Heart left ventricle (tissue), 16 donors: ENCODE measurements at regions of chr5 and their contacts with region 1.

Region 1: DNA sequence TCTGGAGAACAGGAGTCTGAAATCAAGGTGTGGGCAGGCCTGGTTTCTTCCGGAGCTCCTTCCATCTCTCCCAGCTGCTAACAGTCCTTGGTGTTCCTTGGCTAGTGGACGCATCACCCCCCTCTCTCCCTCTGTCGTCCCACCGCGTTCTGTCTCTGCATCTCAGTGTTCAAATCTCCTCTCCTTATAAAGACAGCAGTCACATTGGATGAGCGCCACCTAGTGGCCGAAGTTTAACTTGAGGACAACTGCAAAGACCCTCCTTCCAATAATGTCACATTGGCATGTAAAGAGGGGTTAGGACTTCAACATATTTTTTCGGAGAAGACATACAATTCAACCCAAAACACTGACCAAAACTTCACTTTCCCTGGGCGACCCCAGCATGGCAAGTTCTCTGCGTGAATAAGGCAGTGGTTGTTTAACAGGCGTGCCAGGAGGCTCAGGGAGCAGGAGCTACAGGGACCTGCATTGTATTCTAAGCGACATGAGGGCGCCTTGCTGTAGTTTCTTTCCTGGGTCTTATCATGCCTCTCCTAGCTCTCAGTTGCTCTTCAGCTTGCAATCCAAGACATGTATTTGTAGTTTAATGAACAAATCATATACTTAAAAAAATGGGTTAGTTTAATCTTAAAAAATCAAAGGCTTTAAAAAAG is 27.9 kb upstream of the BASP1 start:
- DNase-seq: peak; percentile 61 to 83 (median 78)
- ATAC-seq: peak; percentile 50 to 75 (median 64)
- H3K4me3 ChIP-seq: no peak overlapping the region
- H3K27ac ChIP-seq: no peak overlapping the region
- H3K4me1 ChIP-seq: peaks cover 0 to 21% (median 6%) of the 10 kb centered on the region in 12 donors
- H3K27me3 ChIP-seq: no peaks in the 10 kb centered on the region
- CTCF ChIP-seq: peak; percentile 77 to 90 (median 82)
- POLR2A ChIP-seq: no peak

Region 2: DNA sequence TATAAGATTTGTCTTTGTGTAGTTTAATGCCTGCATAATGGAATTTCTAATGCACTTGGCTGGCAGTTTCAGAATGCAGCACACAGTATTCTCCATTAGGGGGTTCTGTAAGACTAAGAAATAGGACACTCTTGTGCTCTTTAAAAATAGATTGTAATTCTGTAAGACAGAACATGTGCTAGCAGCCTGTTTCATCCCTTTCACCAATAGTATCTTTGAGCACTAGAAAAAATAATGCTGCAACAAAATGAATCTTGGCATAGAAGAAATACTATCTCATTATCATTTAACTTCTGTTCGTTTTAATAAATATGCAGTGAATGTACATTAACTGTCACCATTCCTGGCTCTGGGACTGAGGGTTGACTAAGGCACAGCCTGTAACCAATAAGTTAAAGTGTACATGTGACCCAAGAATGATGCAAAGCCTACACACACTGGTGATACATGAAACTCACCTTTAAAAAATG is 700.2 kb before region 1 on chr5:
- intact Hi-C with region 1: loop called in 2 of 10 experiments (anchors 10 kb)
- DNase-seq: no peak
- ATAC-seq: peak; percentile 56 to 75 (median 72)
- H3K4me3 ChIP-seq: no peak overlapping the region
- H3K27ac ChIP-seq: peak overlapping the region in 9 of 12 donors; percentile 11 to 82 (median 78)
- H3K4me1 ChIP-seq: peaks cover 0 to 56% (median 20%) of the 10 kb centered on the region in 12 donors
- H3K27me3 ChIP-seq: no peaks in the 10 kb centered on the region
- CTCF ChIP-seq: peak; percentile 18 to 83 (median 70)
- POLR2A ChIP-seq: no peak

Region 3: GRCh38 chr5:16679863-16680262 is 509.6 kb before region 1 on chr5:
- intact Hi-C with region 1: loop called in 2 of 10 experiments (anchors 10 kb)
- DNase-seq: no peak
- ATAC-seq: no peak
- H3K4me3 ChIP-seq: no peak overlapping the region
- H3K27ac ChIP-seq: no peak overlapping the region
- H3K4me1 ChIP-seq: no peaks in the 10 kb centered on the region
- H3K27me3 ChIP-seq: no peaks in the 10 kb centered on the region
- CTCF ChIP-seq: no peak
- POLR2A ChIP-seq: no peak

Region 4: GRCh38 chr5:16690243-16690852 is 499.2 kb before region 1 on chr5:
- intact Hi-C with region 1: loop called in 3 of 10 experiments (anchors 5 to 10 kb)
- DNase-seq: no peak
- ATAC-seq: peak in 3 of 4 donors; percentile 36 to 56 (median 38)
- H3K4me3 ChIP-seq: no peak overlapping the region
- H3K27ac ChIP-seq: no peak overlapping the region
- H3K4me1 ChIP-seq: peaks cover 0 to 2% (median 0%) of the 10 kb centered on the region in 12 donors
- H3K27me3 ChIP-seq: no peaks in the 10 kb centered on the region
- CTCF ChIP-seq: peak; percentile 29 to 62 (median 48)
- POLR2A ChIP-seq: no peak

Region 5: GRCh38 chr5:16791036-16791705 is 398.3 kb before region 1 on chr5:
- intact Hi-C with region 1: loop called (anchors 1 to 5 kb)
- DNase-seq: no peak
- ATAC-seq: no peak
- H3K4me3 ChIP-seq: peak overlapping the region in 1 of 12 donors; percentile 1
- H3K27ac ChIP-seq: no peak overlapping the region
- H3K4me1 ChIP-seq: peaks cover 0 to 4% (median 0%) of the 10 kb centered on the region in 12 donors
- H3K27me3 ChIP-seq: no peaks in the 10 kb centered on the region
- CTCF ChIP-seq: peak; percentile 66 to 84 (median 79)
- POLR2A ChIP-seq: no peak

Region 6: GRCh38 chr5:17132444-17133083 is 56.9 kb before region 1 on chr5:
- intact Hi-C with region 1: loop called in 3 of 10 experiments (anchors 5 to 10 kb)
- DNase-seq: no peak
- ATAC-seq: no peak
- H3K4me3 ChIP-seq: no peak overlapping the region
- H3K27ac ChIP-seq: no peak overlapping the region
- H3K4me1 ChIP-seq: peaks cover 0 to 7% (median 0%) of the 10 kb centered on the region in 12 donors
- H3K27me3 ChIP-seq: no peaks in the 10 kb centered on the region
- CTCF ChIP-seq: peak; percentile 47 to 76 (median 70)
- POLR2A ChIP-seq: no peak